Right cardiac atrium (tissue), 5 donors: ENCODE measurements at regions of chr4 and their contacts with region 1.

Region 1: DNA sequence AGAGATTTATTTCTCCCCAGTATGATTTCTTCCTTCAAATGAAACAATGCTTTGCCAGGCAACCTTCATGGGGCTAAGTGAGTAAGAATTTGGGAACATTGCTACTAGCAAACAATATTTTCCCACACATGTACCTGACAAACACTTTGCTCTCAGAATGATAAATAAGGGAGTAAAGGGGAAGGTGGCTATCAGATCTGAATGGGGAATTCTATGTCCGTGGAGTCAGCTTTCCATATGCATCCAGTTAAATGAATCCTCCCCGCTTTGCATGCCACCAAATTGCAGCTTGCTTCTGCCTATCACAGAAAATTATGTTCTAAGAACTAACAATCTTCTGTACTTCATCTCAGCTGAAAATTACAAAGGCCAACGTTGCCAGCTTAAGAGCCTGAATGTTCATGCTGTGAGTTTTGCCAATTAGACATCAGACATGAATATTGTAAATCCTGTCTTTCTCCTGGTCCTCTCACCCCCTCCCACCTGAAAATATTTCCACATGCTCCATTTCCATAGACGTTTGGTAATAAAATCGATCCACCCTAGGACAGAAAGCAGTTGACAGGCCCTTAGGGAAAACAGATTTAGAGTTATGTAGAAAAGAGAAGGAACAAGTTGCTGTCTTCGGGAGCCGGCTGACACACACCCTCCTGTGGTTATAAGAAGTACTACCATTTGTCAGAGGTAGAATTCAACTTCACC is 6.3 kb downstream of the MEPE start:
- DNase-seq: peak in 2 of 3 donors; percentile 27 to 43
- ATAC-seq: peak; percentile 52 to 61
- H3K4me3 ChIP-seq: no peak overlapping the region
- H3K27ac ChIP-seq: no peak overlapping the region
- H3K4me1 ChIP-seq: no peaks in the 10 kb centered on the region
- H3K27me3 ChIP-seq: no peaks in the 10 kb centered on the region

Region 2: GRCh38 chr4:87363567-87363966 is 475.5 kb before region 1 on chr4:
- intact Hi-C with region 1: no loop called
- DNase-seq: no peak
- ATAC-seq: no peak
- H3K4me3 ChIP-seq: no peak overlapping the region
- H3K27ac ChIP-seq: no peak overlapping the region
- H3K4me1 ChIP-seq: no peaks in the 10 kb centered on the region
- H3K27me3 ChIP-seq: no peaks in the 10 kb centered on the region

Region 3: DNA sequence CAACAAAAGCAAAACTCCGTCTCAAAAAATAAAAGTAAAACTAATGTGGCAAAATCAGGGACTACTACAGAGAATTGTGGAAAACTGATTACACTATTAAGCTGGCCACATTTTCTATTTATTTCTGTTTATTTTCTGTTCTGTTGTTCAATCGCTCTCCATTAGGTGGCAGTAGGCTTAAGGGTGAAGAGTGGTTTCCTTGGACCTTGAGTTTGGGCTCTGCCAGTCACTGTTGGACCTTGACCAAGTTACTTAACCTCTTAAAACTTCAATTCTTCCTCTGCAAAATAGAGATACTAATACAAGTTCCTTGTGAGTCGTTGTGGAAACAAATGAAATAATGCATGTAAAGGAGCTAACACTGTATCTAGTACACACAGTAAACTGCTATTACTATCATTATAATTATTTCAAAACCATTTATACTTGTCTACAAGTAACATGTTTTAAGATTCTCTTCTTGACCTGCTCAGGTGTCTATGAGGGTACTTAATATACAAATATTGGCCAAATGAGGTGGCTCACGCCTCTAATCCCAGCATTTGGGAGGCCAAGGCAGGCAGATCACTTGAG is 463.2 kb before region 1 on chr4:
- intact Hi-C with region 1: loop called in 3 of 4 experiments (anchors 5 to 10 kb)
- DNase-seq: peak in 2 of 3 donors; percentile 30 to 72
- ATAC-seq: peak; percentile 78 to 84
- H3K4me3 ChIP-seq: no peak overlapping the region
- H3K27ac ChIP-seq: no peak overlapping the region
- H3K4me1 ChIP-seq: no peaks in the 10 kb centered on the region
- H3K27me3 ChIP-seq: no peaks in the 10 kb centered on the region

Region 4: DNA sequence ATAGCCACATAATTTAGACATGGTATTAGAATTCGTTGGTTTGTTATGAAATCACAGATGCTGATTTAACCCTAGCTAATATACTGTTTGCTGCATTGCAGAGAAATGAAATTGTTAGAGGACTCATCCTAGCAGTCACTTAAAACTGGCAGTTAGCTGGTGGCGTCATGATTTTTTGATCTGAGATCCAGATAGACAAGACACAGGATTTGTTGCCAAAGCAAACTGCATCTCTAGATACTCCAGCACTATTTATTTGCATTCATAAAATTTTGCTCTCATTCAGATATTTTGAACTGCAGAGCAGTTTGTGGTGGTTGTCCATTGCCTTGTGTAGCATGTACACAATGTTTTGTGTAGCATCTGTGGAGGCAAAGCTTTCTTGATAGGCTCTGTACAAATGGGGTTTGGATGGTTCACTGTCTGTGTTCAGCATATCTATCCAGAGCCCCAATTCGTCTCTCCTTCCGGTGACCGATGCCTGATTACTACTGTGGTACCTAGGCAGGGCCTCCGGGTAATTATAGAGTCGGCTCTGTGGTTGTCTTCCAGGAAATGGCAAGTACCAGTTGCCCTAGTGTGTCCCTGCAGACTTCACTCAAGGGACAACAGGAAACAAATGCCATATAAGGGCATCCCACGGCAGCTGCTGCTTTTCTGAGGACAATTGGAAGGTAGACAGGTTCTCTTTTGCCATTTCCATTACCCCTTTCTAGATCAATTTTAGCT is 279.8 kb before region 1 on chr4:
- intact Hi-C with region 1: loop called in 1 of 4 experiments (anchors 10 kb)
- DNase-seq: no peak
- ATAC-seq: peak; percentile 49 to 50
- H3K4me3 ChIP-seq: no peak overlapping the region
- H3K27ac ChIP-seq: no peak overlapping the region
- H3K4me1 ChIP-seq: no peaks in the 10 kb centered on the region
- H3K27me3 ChIP-seq: no peaks in the 10 kb centered on the region